ENCODE measurements at regions of chr4 and their contacts with region 1.

Region 1: GRCh38 chr4:12633053-12633651 is 851.0 kb downstream of the RAB28 start:
- DNase-seq: peak; percentile 87
- ATAC-seq: peak; percentile 83
- H3K4me3 Mint-ChIP-seq: no peak overlapping the region
- H3K27ac Mint-ChIP-seq: no peak overlapping the region
- H3K4me1 Mint-ChIP-seq: no peaks in the 10 kb centered on the region
- H3K27me3 Mint-ChIP-seq: peaks cover 11% of the 10 kb centered on the region

Region 2: GRCh38 chr4:11428899-11429698 is 1204.1 kb before region 1 on chr4:
- CTCF ChIA-PET with region 1: no interaction called
- POLR2A ChIA-PET with region 1: no interaction called
- intact Hi-C with region 1: loop called (anchors 10 kb)
- DNase-seq: peak; percentile 70
- ATAC-seq: peak; percentile 89
- H3K4me3 Mint-ChIP-seq: peak overlapping the region; percentile 57
- H3K27ac Mint-ChIP-seq: no peak overlapping the region
- H3K4me1 Mint-ChIP-seq: peaks cover 15% of the 10 kb centered on the region
- H3K27me3 Mint-ChIP-seq: peaks cover 33% of the 10 kb centered on the region

Region 3: DNA sequence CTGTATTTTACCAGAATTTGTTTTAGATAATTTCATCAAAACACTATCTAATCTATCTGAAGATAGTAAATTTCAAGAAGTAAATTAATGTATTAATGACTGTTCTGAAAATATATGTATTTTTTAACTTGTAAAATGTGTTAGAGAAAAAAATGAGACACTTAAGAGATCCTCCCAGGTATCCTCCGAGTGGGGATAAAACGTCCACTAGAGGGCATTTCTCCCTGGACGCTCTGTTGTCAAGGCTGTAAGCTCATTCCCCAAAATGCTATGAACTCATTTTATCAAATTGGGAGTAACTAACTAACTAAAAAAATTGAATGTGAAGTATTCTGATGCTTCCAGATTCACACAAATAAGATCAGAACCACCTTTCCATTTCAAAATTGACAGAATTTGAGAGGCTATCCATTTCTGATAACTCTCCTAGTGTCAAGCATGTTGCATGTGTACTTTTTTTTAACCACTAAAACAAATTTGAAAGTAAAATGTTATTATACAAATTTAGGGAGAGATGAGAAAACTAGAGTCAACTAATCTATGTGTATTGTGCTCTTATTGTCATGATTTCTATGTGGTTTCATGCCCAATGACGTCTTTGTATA is 867.2 kb before region 1 on chr4:
- CTCF ChIA-PET with region 1: interaction called, 4 read pairs
- POLR2A ChIA-PET with region 1: no interaction called
- intact Hi-C with region 1: loop called (anchors 1 to 2 kb)
- DNase-seq: peak; percentile 38
- ATAC-seq: no peak
- H3K4me3 Mint-ChIP-seq: no peak overlapping the region
- H3K27ac Mint-ChIP-seq: no peak overlapping the region
- H3K4me1 Mint-ChIP-seq: no peaks in the 10 kb centered on the region
- H3K27me3 Mint-ChIP-seq: peaks cover 2% of the 10 kb centered on the region

Region 4: DNA sequence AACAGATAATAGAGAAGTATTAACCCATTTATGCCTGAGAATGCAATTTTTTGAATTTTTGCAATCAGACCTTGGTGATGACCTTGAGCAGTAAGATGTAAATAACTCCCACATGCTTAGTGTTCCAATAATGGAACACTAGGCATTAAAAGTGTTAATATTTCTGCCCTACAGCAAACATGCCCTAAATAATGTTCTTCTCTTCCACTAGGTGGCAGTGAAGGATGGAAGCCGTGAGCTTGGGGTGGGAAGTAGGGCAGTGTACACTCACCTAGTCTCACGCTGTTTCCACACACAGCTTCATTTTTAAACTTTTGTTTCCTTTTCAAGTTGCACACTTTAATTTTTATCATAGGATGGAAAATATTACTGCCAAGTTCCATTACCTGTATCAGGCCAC is 591.3 kb before region 1 on chr4:
- CTCF ChIA-PET with region 1: interaction called, 3 read pairs
- POLR2A ChIA-PET with region 1: no interaction called
- intact Hi-C with region 1: loop called in 1 of 2 experiments (anchors 1 kb)
- DNase-seq: peak; percentile 3
- ATAC-seq: no peak
- H3K4me3 Mint-ChIP-seq: no peak overlapping the region
- H3K27ac Mint-ChIP-seq: no peak overlapping the region
- H3K4me1 Mint-ChIP-seq: no peaks in the 10 kb centered on the region
- H3K27me3 Mint-ChIP-seq: no peaks in the 10 kb centered on the region

Region 5: GRCh38 chr4:12178614-12179610 is 454.2 kb before region 1 on chr4:
- CTCF ChIA-PET with region 1: no interaction called
- POLR2A ChIA-PET with region 1: no interaction called
- intact Hi-C with region 1: no loop called
- DNase-seq: no peak
- ATAC-seq: no peak
- H3K4me3 Mint-ChIP-seq: no peak overlapping the region
- H3K27ac Mint-ChIP-seq: no peak overlapping the region
- H3K4me1 Mint-ChIP-seq: no peaks in the 10 kb centered on the region
- H3K27me3 Mint-ChIP-seq: no peaks in the 10 kb centered on the region